Endothelial cell of umbilical vein (primary cell): ENCODE measurements at regions of chr2 and their contacts with region 1.

Region 1: DNA sequence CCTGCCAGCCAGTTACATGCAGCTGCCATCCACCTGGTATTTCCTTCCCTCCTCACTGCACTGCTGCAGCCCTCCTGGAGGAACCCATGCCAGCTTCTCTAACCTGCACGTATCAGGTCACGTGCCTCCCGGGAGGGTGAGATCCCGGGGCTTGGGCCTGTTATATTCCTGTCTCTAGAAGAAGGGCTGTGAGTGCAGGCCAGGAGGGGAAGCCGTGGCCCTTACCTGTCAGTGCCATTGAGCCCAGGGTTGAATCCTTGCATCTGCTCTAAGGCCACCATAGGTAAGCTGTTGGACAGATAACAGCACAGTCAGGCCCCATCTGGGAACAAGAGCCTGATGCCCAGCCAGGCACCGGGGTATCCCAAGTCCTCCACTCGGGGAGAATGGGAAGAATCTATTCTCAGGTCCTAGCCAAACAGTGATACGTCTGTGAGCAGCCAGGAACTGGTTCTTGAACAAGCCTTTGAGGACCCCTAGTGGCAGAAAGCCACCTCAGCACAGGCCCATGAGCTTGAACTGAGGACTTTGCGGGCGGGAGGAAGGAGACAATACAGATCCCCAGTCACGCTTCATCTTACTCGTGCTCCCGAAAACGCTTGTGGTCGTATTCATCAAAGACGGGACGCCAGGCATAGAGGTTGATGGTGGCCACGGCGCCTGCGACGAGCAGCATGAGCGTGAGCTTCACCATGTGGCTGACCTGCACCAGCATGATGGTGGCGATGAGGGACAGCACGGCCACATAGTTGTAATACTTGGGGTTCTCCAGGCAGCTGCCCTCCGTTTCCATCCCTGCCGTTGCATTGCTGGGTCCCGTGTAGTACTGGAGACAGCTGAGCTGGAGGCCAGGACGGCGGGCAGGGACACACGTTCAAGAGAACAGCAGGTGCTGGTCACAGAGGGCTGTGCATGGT is 34.4 kb downstream of the CENPO start:
- DNase-seq: peak; percentile 82
- H3K4me3 ChIP-seq: no peak overlapping the region
- H3K27ac ChIP-seq: no peak overlapping the region
- H3K4me1 ChIP-seq: peaks cover 20% of the 10 kb centered on the region
- H3K27me3 ChIP-seq: no peaks in the 10 kb centered on the region
- CTCF ChIP-seq: peak; percentile 91 to 93
- POLR2A ChIP-seq: no peak

Region 2: GRCh38 chr2:24404491-24404921 is 423.1 kb before region 1 on chr2:
- CTCF ChIA-PET with region 1: interaction called, 198 read pairs
- POLR2A ChIA-PET with region 1: no interaction called
- dilution Hi-C with region 1: no loop called
- intact Hi-C with region 1: no loop called
- DNase-seq: no peak
- H3K4me3 ChIP-seq: no peak overlapping the region
- H3K27ac ChIP-seq: no peak overlapping the region
- H3K4me1 ChIP-seq: no peaks in the 10 kb centered on the region
- H3K27me3 ChIP-seq: peaks cover 2 to 5% of the 10 kb centered on the region in 2 experiments
- CTCF ChIP-seq: no peak
- POLR2A ChIP-seq: no peak

Region 3: DNA sequence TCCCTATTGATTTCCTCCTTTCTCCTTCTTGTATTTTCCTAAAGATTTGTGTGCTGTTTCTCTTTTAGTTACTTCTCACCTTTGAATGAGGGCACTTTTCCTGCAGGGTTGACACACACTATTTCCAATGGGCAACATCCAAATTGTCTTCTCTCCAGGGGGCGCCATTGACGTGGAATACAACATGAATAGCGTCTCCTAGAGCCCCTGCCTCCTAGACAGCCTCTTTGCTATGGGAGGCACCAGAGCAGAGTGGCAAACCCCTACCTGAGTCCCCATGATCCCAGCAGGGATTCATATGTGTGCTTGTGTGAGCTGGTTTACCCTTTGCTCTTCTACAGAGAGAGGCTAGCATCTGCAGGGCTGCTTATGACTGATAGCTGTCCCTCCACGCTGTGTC is 405.9 kb before region 1 on chr2:
- CTCF ChIA-PET with region 1: interaction called, 173 read pairs
- POLR2A ChIA-PET with region 1: no interaction called
- dilution Hi-C with region 1: no loop called
- intact Hi-C with region 1: loop called (anchors 1 kb)
- DNase-seq: peak; percentile 62
- H3K4me3 ChIP-seq: no peak overlapping the region
- H3K27ac ChIP-seq: no peak overlapping the region
- H3K4me1 ChIP-seq: no peaks in the 10 kb centered on the region
- H3K27me3 ChIP-seq: peaks cover 3 to 5% of the 10 kb centered on the region in 2 experiments
- CTCF ChIP-seq: peak; percentile 48 to 63
- POLR2A ChIP-seq: no peak

Region 4: GRCh38 chr2:24613154-24613814 is 214.3 kb before region 1 on chr2:
- CTCF ChIA-PET with region 1: interaction called, 122 read pairs
- POLR2A ChIA-PET with region 1: no interaction called
- dilution Hi-C with region 1: no loop called
- intact Hi-C with region 1: loop called (anchors 1 kb)
- DNase-seq: peak; percentile 45
- H3K4me3 ChIP-seq: no peak overlapping the region
- H3K27ac ChIP-seq: no peak overlapping the region
- H3K4me1 ChIP-seq: no peaks in the 10 kb centered on the region
- H3K27me3 ChIP-seq: no peaks in the 10 kb centered on the region
- CTCF ChIP-seq: peak; percentile 49 to 55
- POLR2A ChIP-seq: no peak

Region 5: GRCh38 chr2:24792874-24793760 is 34.5 kb before region 1 on chr2 and contains the starts of genes CENPO and PTRHD1:
- CTCF ChIA-PET with region 1: interaction called, 43 read pairs
- POLR2A ChIA-PET with region 1: interaction called, 3 read pairs
- dilution Hi-C with region 1: no loop called
- intact Hi-C with region 1: loop called (anchors 1 kb)
- DNase-seq: peak; percentile 98
- H3K4me3 ChIP-seq: peak within 1 kb of the TSS; percentile 57 to 82 (median 61)
- H3K27ac ChIP-seq: peak within 1 kb of the TSS; percentile 81
- H3K4me1 ChIP-seq: peaks cover 20% of the 10 kb centered on the region
- H3K27me3 ChIP-seq: no peaks in the 10 kb centered on the region
- CTCF ChIP-seq: peak; percentile 67 to 82
- POLR2A ChIP-seq: no peak
- total RNA-seq, gene CENPO: 42.2 and 45.3 TPM in 2 replicates
- total RNA-seq, gene PTRHD1: 35.6 and 41.1 TPM in 2 replicates

Region 6: DNA sequence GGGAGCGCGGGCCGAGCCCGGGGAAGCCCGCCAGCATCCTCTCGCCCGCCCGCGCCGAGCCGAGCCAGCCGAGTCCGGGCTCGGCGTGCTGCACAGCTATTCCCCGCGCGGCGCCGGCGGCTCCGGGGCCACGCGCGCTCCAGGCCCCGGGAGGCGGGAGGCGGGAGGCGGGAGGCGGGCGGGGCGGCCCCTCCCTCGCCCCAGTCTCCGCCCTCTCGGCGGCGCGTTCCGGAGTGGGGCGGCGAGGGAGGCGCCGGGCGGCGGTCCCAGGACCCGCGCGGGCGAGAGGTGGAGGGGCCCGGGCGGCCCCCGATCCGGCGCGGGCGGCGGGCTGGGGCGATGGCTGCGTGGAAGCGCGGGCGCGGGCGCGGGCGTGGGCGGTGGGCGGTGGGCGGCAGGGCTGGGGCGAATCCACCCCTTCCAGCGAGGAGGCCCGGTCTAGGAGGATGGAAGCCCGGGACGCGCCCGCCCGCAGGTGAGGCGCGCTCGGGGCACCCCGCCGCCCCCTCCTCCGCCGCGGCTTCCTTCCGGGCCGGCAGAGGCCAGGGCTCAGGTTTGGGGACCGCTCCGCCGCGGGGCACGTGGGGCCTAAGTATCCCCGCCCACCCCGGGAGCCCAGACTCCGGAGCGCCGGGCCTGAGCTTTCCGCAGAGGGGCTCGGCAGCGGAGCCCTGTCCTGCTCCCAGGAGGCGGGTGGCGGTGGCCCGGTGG is 92.7 kb after region 1 on chr2 and contains the start of gene ADCY3:
- CTCF ChIA-PET with region 1: no interaction called
- POLR2A ChIA-PET with region 1: no interaction called
- dilution Hi-C with region 1: no loop called
- intact Hi-C with region 1: loop called (anchors 2 kb)
- DNase-seq: no peak
- H3K4me3 ChIP-seq: peak within 1 kb of the TSS; percentile 37 to 52 (median 46)
- H3K27ac ChIP-seq: no peak within 1 kb of the TSS
- H3K4me1 ChIP-seq: peaks cover 6% of the 10 kb centered on the region
- H3K27me3 ChIP-seq: no peaks in the 10 kb centered on the region
- CTCF ChIP-seq: no peak
- POLR2A ChIP-seq: no peak
- total RNA-seq, gene ADCY3: 54.0 and 54.4 TPM in 2 replicates

Region 7: GRCh38 chr2:24945907-24946306 is 118.3 kb after region 1 on chr2:
- CTCF ChIA-PET with region 1: no interaction called
- POLR2A ChIA-PET with region 1: no interaction called
- dilution Hi-C with region 1: no loop called
- intact Hi-C with region 1: no loop called
- DNase-seq: no peak
- H3K4me3 ChIP-seq: no peak overlapping the region
- H3K27ac ChIP-seq: no peak overlapping the region
- H3K4me1 ChIP-seq: no peaks in the 10 kb centered on the region
- H3K27me3 ChIP-seq: no peaks in the 10 kb centered on the region
- CTCF ChIP-seq: no peak
- POLR2A ChIP-seq: no peak

Region 8: GRCh38 chr2:25131567-25132298 is 304.2 kb after region 1 on chr2:
- CTCF ChIA-PET with region 1: interaction called, 32 read pairs
- POLR2A ChIA-PET with region 1: no interaction called
- dilution Hi-C with region 1: no loop called
- intact Hi-C with region 1: loop called (anchors 2 kb)
- DNase-seq: no peak
- H3K4me3 ChIP-seq: no peak overlapping the region
- H3K27ac ChIP-seq: no peak overlapping the region
- H3K4me1 ChIP-seq: peaks cover 4% of the 10 kb centered on the region
- H3K27me3 ChIP-seq: peaks cover 7 to 24% of the 10 kb centered on the region in 2 experiments
- CTCF ChIP-seq: no peak
- POLR2A ChIP-seq: no peak